GM10248 (cell line): ENCODE measurements at regions of chr3 and their contacts with region 1.

Region 1: GRCh38 chr3:127652231-127652995 is 20.3 kb upstream of the ABTB1 start:
- DNase-seq: peak; percentile 77
- CTCF ChIP-seq: peak; percentile 80

Region 2: DNA sequence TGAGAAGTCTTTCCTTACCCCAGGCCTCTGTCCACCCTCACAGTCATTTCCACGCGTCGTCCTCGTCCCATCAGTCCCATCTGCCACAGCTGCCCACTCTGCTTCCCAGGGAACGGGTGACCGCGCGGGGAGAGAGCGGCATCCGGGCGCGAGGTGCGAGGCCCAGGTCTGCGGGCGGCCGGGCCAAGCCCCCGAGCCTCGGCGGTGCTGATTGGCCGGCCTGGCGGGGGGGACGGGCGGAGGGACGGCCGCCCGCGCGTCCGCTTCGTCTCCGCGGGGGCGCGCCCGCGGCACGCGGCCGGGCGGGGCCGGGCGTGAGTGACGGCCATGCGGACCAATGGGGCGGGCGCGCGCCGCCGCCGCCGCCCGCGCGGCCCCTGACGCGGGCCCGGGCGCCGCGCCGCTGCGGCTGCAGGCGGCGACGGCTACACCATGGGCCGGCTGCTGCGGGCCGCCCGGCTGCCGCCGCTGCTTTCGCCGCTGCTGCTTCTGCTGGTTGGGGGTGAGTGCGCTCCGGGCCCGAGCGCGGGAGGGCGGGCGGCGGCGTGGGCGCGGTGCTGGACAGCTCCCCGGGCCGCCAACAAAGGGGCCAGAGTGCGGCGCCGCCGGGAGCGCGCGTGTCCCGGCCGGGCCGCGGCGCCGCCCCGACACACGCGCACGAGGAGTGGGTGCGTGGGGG is 23.5 kb before region 1 on chr3 and contains the start of gene PODXL2:
- CTCF ChIA-PET with region 1: interaction called, 10 read pairs
- POLR2A ChIA-PET with region 1: no interaction called
- DNase-seq: peak; percentile 79
- CTCF ChIP-seq: no peak

Region 3: DNA sequence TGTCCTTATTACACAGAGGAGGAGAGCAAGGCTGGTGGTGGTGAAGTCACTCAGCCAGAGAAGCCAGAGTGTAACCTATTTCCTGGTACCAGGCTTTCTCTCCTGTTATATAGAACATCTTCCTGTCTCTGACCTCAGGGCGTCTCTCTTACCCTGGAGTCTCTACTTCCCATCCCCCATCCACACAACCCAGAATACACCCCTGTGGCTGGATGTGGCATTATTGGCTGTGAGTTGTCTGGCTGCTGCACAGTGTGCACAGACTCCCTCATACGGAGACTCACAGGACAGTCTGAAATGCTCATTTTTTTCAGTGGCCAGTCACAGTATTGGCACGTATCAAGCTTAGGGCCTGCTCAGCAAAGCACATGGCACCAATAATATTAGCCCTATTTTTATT is 14.9 kb before region 1 on chr3:
- CTCF ChIA-PET with region 1: interaction called, 21 read pairs
- POLR2A ChIA-PET with region 1: no interaction called
- DNase-seq: no peak
- CTCF ChIP-seq: no peak

Region 4: DNA sequence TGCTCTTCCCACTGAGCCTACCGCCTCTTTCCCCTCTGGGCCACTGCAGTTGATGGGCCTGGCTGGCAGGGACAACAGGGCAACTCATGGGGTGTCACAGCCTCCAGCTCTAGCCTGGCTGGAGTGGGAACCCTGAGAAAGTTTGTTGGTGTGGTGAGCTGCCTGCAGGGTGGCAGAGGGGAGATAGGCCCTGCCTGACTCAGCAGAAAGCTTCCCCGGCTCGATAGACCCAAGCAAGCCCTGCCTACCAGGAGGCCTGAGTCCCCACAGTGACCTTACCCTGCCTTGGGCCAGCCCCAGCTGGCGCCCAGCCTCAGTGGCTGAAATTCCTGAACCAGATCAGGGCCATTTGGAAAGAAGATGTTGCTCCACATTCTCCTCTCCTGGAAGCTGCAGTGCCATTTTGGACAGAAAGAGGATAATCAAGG is 49.8 kb after region 1 on chr3:
- CTCF ChIA-PET with region 1: no interaction called
- POLR2A ChIA-PET with region 1: no interaction called
- DNase-seq: no peak
- CTCF ChIP-seq: no peak

Region 5: DNA sequence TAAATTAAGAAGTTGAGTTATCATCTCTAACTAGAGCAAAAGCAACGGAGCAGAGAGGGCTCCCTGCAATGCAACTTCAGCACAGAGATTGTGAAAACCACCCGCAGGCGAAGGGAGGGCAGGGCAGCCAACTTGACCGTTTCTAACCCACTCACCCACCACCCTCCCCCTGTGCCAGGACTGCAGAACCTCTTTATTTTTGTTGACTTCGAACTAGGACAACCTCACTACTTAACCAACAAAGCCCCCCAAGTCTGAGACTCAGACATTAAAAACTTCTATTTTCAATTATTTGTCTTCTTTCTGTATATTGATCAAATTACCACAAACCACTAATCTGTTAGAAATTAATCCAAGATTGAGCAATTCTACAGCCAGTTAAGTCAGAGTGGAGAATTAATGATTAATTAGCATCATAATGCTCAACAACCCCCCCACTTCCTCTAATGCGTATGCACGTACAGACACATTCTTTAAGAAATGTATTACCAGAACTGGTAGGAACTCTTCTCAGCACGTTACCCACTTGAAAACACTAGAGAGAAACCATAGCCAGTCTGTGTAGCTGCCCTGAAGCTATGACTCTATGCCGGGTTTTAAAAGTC is 167.9 kb after region 1 on chr3:
- CTCF ChIA-PET with region 1: no interaction called
- POLR2A ChIA-PET with region 1: no interaction called
- DNase-seq: no peak
- CTCF ChIP-seq: no peak

Region 6: DNA sequence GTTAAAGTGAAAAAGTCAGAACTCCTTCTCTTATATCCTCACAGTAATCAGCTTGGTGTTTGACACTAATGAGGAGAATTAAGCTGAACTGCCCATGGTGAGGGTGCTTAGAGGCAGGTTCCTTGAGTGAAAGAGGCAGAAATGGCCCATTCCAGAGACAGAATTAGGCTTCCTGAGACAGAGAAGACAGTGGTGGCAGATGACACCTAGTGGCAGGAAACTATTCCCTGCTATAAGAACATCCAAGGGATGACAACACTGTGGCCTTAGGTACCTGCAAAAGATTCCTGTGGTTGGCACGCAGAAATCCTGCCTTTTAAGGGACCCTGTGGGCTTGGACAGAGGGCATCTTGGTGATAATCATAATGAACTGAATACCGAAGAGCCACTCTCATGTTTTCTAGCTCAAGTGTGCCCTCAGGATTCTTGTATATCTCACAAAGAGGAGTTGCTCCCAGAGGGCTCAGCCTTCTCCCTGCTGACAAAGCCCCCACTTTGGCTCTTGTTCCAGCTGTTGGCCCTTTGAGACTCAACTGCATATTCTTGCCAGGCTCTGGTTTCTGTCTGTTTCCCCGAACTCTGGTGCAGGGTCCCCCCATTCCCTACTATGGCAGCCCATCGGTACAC is 318.7 kb after region 1 on chr3:
- CTCF ChIA-PET with region 1: interaction called, 13 read pairs
- POLR2A ChIA-PET with region 1: no interaction called
- DNase-seq: peak; percentile 56
- CTCF ChIP-seq: peak; percentile 74

Region 7: GRCh38 chr3:128198313-128198712 is 545.9 kb after region 1 on chr3:
- CTCF ChIA-PET with region 1: no interaction called
- POLR2A ChIA-PET with region 1: no interaction called
- DNase-seq: no peak
- CTCF ChIP-seq: no peak